PC-3 (cell line): ENCODE measurements at regions of chr19 and their contacts with region 1.

Region 1: DNA sequence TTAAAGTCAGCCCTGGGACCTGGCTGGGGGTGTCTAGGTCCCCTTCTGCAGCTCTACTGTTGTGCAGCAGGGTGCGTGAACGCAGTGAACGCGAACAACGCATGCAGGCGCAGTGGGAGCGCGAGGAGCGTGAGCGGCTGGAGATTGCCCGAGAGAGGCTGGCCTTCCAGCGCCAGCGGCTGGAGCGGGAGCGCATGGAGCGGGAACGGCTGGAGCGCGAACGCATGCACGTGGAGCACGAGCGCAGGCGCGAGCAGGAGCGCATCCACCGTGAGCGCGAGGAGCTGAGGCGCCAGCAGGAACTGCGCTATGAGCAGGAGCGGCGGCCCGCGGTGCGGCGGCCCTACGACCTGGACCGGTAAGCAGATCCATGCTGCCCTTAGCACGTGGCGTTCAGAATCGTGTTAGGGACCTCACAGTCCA is 18.9 kb downstream of the MICOS13 start:
- DNase-seq: no peak
- ATAC-seq: no peak
- H3K4me3 ChIP-seq: no peak overlapping the region
- H3K27ac ChIP-seq: no peak overlapping the region
- H3K4me1 ChIP-seq: no peaks in the 10 kb centered on the region
- H3K27me3 ChIP-seq: no peaks in the 10 kb centered on the region
- CTCF ChIP-seq: no peak

Region 2: GRCh38 chr19:5372572-5373200 is 288.8 kb before region 1 on chr19:
- CTCF ChIA-PET with region 1: no interaction called
- POLR2A ChIA-PET with region 1: no interaction called
- intact Hi-C with region 1: no loop called
- DNase-seq: no peak
- ATAC-seq: no peak
- H3K4me3 ChIP-seq: no peak overlapping the region
- H3K27ac ChIP-seq: no peak overlapping the region
- H3K4me1 ChIP-seq: no peaks in the 10 kb centered on the region
- H3K27me3 ChIP-seq: peaks cover 7% of the 10 kb centered on the region; the same call in 1 of the 2 replicates
- CTCF ChIP-seq: no peak

Region 3: DNA sequence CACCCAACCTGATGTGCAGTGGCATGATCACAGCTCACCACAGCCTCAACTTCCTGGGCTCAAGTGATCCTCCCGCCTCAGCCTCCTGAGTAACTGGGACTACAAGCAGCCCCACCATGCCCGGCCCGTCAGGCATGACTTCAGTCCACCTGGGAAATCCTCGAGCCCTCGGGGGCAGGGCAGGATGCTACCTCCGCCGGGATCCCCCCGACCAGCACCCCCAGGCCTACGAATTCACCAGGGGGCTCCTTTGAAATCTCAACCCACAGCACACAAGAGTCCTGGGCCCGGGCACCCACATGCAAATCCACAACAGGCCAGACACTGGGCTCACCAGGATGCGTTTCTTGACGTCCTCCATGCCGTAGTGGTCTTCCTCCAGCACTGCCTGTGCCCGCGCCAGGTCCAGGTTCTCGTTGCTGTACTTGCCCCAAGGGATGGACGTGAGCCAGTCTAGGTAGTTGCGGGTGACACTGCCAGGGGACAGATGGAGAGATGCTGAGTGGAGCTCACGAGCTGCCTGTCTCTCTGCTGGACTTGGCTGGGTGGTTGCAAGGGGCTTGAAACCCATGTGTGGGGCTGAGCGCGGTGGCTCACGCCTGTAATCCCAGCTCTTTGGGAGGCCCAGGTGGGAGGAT is 39.1 kb after region 1 on chr19:
- CTCF ChIA-PET with region 1: no interaction called
- POLR2A ChIA-PET with region 1: interaction called, 13 read pairs
- intact Hi-C with region 1: no loop called
- DNase-seq: no peak
- ATAC-seq: no peak
- H3K4me3 ChIP-seq: no peak overlapping the region
- H3K27ac ChIP-seq: no peak overlapping the region
- H3K4me1 ChIP-seq: 0 out of 2 replicates have a peak, but pooled peaks cover 6% of the 10 kb centered on the region
- H3K27me3 ChIP-seq: no peaks in the 10 kb centered on the region
- CTCF ChIP-seq: no peak

Region 4: DNA sequence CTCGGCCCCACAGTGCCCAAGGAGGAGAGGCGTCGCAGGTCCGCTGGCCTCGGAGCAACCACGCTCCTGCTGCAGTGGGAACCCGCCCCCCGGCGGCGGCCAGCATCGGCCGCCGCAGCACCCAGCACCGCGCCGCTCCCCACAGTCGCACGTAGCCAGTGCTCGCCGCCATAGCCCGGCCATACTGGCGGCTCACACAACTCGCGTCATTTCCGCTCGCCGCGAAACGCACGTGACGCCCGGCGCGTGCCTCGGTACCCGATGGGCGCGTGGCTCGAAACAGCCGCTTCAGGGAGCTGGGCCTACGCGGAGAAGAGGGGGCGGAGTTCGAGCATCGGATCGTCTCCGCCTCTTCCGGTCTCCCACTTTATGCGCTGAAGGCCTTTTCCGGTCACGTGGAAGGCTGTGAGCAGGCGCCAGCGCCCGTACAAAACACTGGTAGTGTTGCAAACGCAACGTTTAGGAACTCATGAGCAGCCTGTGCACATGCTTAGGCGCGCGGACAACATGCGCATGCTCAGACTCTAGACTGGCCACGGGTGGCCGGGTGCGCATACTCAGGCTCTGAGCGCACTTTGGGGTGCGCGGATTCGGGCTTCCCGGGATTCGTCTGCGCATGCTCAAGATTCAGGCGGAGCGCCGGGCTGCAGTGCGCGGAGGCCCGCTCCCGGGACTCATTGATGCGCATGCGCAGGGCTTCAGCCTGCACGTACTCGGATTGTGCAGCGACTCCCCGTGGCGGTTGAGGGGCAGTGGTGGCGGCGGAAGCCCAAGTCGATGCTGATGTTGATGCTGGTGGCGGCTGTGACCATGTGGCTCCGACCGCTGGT is 58.7 kb after region 1 on chr19 and contains the starts of genes CATSPERD and LONP1:
- CTCF ChIA-PET with region 1: no interaction called
- POLR2A ChIA-PET with region 1: interaction called, 11 read pairs
- intact Hi-C with region 1: no loop called
- DNase-seq: peak; percentile 100
- ATAC-seq: peak; percentile 89
- H3K4me3 ChIP-seq: peak within 1 kb of the TSS; percentile 95
- H3K27ac ChIP-seq: peak within 1 kb of the TSS; percentile 93
- H3K4me1 ChIP-seq: peaks cover 18% of the 10 kb centered on the region
- H3K27me3 ChIP-seq: no peaks in the 10 kb centered on the region
- CTCF ChIP-seq: peak; percentile 92
- total RNA-seq, gene CATSPERD: not detected in 2 replicates
- total RNA-seq, gene LONP1: 217 and 306 TPM in 2 replicates

Region 5: DNA sequence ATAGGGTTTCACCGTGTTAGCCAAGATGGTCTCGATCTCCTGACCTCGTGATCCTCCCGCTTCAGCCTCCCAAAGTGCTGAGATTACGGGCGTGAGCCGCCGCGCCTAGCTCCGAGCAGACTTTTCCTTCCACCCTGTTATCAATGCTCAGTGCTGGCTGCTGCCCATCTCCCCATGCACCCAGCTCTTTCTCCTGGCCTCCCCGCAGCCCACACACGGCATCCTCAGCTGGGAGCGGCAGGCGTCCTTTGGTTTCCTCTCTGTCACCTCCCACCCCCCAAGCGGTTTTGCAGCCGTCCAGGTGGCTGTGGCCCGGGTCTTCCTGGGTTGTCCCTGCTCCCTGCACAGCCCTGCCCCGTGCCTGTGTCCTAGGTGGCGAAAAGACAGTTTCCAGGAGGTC is 111.0 kb after region 1 on chr19:
- CTCF ChIA-PET with region 1: no interaction called
- POLR2A ChIA-PET with region 1: no interaction called
- intact Hi-C with region 1: no loop called
- DNase-seq: no peak
- ATAC-seq: no peak
- H3K4me3 ChIP-seq: no peak overlapping the region
- H3K27ac ChIP-seq: no peak overlapping the region
- H3K4me1 ChIP-seq: no peaks in the 10 kb centered on the region
- H3K27me3 ChIP-seq: no peaks in the 10 kb centered on the region
- CTCF ChIP-seq: no peak